ENCODE measurements at regions of chr5 and their contacts with region 1.

Region 1: DNA sequence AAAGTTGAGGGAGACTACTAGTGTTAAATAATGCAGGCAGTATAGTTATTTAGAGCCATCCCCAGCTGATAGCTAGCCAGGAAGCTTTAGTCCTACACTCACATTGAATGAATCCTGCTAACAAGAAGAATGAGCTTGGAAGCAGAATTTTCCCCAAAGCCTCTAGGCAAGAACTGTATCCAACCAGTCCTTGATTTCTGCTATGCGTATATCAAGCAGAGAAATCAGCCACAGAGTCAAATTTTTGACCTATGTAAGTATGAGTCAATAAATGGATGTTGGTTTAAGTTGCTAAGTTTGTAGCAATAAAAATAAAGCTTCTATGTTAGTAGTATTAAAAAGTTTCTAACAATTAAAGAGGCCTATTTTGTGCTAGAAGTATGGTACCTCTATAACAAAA is 672.1 kb upstream of the CHD1 start:
- DNase-seq: no peak
- H3K4me3 Mint-ChIP-seq: no peak overlapping the region
- H3K27ac Mint-ChIP-seq: no peak overlapping the region
- H3K4me1 Mint-ChIP-seq: no peaks in the 10 kb centered on the region
- H3K27me3 Mint-ChIP-seq: peaks cover 68% of the 10 kb centered on the region
- CTCF ChIP-seq: no peak

Region 2: DNA sequence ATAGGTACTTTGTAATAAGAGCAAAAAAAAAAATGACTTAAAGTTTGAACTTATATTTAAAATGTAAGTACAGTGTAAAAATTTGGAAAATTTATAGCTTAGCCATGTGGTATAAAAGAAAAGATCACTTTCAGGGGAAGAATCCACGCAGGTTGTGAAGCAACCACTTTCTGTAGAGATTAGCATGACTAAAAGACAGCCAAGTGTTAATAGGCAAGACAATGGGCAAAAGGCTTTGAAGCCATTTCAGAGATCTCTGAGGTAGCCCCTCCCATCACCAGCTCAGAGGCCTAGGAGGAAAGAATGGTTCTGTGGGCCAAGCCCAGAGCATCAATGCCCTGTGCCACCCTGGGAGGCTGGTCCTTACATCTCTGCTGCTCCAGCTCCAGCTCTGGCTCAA is 325.8 kb before region 1 on chr5:
- CTCF ChIA-PET with region 1: no interaction called
- POLR2A ChIA-PET with region 1: no interaction called
- intact Hi-C with region 1: no loop called
- DNase-seq: no peak
- H3K4me3 Mint-ChIP-seq: no peak overlapping the region
- H3K27ac Mint-ChIP-seq: no peak overlapping the region
- H3K4me1 Mint-ChIP-seq: no peaks in the 10 kb centered on the region
- H3K27me3 Mint-ChIP-seq: peaks cover 57% of the 10 kb centered on the region
- CTCF ChIP-seq: no peak

Region 3: GRCh38 chr5:99369797-99370593 is 231.0 kb before region 1 on chr5:
- CTCF ChIA-PET with region 1: no interaction called
- POLR2A ChIA-PET with region 1: no interaction called
- intact Hi-C with region 1: loop called (anchors 5 kb)
- DNase-seq: no peak
- H3K4me3 Mint-ChIP-seq: no peak overlapping the region
- H3K27ac Mint-ChIP-seq: no peak overlapping the region
- H3K4me1 Mint-ChIP-seq: no peaks in the 10 kb centered on the region
- H3K27me3 Mint-ChIP-seq: peaks cover 55% of the 10 kb centered on the region
- CTCF ChIP-seq: no peak

Region 4: DNA sequence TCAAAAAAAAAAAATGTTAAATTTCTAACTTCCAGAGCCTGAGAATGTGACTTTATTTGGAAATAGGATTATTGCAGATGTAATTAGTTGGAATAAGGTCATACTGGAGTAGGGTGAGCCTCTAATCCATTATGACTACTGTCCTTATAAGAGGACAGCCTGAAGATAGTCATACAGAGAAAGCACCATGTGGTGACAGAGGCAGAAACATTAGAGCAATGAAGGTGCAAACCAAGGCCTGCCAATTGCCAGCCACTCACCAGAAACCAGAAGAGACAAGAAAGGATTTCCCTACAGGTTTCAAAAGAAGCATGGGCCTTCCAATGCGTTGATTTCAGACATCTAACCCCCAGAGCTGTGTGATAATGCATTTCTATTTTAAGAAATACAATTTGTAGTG is 13.0 kb before region 1 on chr5:
- CTCF ChIA-PET with region 1: no interaction called
- POLR2A ChIA-PET with region 1: no interaction called
- intact Hi-C with region 1: no loop called
- DNase-seq: no peak
- H3K4me3 Mint-ChIP-seq: no peak overlapping the region
- H3K27ac Mint-ChIP-seq: no peak overlapping the region
- H3K4me1 Mint-ChIP-seq: no peaks in the 10 kb centered on the region
- H3K27me3 Mint-ChIP-seq: peaks cover 63% of the 10 kb centered on the region
- CTCF ChIP-seq: no peak

Region 5: DNA sequence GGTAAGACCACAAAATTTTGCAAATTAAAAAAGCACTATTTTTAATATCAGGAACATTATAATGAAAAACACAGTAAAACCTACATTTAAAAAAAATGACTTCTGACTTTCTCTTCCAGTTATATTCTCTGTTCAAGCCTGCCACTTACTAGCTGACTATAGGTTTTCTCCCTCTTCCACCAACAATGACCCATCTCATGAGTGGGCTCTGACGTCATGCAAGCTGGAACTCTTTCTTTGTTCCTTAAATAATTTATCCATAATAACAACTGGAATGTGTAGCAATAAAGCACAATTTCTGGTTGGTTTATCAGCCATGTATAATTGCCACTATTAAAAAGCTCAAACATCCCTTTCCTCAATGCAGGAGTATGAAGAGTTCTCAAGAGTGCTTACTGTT is 556.1 kb after region 1 on chr5:
- CTCF ChIA-PET with region 1: no interaction called
- POLR2A ChIA-PET with region 1: no interaction called
- intact Hi-C with region 1: no loop called
- DNase-seq: no peak
- H3K4me3 Mint-ChIP-seq: no peak overlapping the region
- H3K27ac Mint-ChIP-seq: no peak overlapping the region
- H3K4me1 Mint-ChIP-seq: no peaks in the 10 kb centered on the region
- H3K27me3 Mint-ChIP-seq: no peaks in the 10 kb centered on the region
- CTCF ChIP-seq: no peak

Measured in MCF 10A (cell line).